ENCODE measurements at regions of chr11 and their contacts with region 1.

Region 1: GRCh38 chr11:45110562-45110961 is 35.9 kb upstream of the PRDM11 start:
- DNase-seq: peak; percentile 79
- ATAC-seq: peak; percentile 57
- H3K4me3 ChIP-seq: no peak overlapping the region
- H3K4me3 Mint-ChIP-seq: no peak overlapping the region
- H3K27ac ChIP-seq: no peak overlapping the region
- H3K27ac Mint-ChIP-seq: no peak overlapping the region
- H3K4me1 ChIP-seq: peaks cover 5% of the 10 kb centered on the region in 2 donors
- H3K4me1 Mint-ChIP-seq: peaks cover 5% of the 10 kb centered on the region
- H3K27me3 ChIP-seq: peaks cover 0 to 13% (median 8%) of the 10 kb centered on the region in 4 experiments
- H3K27me3 Mint-ChIP-seq: peaks cover 49% of the 10 kb centered on the region
- CTCF ChIP-seq: peak; percentile 80

Region 2: GRCh38 chr11:44911029-44911814 is 199.3 kb before region 1 on chr11:
- CTCF ChIA-PET with region 1: interaction called, 36 read pairs
- POLR2A ChIA-PET with region 1: no interaction called
- intact Hi-C with region 1: no loop called
- DNase-seq: peak; percentile 85
- ATAC-seq: peak; percentile 69
- H3K4me3 ChIP-seq: no peak overlapping the region
- H3K4me3 Mint-ChIP-seq: no peak overlapping the region
- H3K27ac ChIP-seq: no peak overlapping the region
- H3K27ac Mint-ChIP-seq: no peak overlapping the region
- H3K4me1 ChIP-seq: peaks cover 23 to 31% of the 10 kb centered on the region in 2 donors
- H3K4me1 Mint-ChIP-seq: peaks cover 24% of the 10 kb centered on the region
- H3K27me3 ChIP-seq: peaks cover 0 to 5% (median 0%) of the 10 kb centered on the region in 4 experiments
- H3K27me3 Mint-ChIP-seq: peaks cover 4% of the 10 kb centered on the region
- CTCF ChIP-seq: peak; percentile 82

Region 3: DNA sequence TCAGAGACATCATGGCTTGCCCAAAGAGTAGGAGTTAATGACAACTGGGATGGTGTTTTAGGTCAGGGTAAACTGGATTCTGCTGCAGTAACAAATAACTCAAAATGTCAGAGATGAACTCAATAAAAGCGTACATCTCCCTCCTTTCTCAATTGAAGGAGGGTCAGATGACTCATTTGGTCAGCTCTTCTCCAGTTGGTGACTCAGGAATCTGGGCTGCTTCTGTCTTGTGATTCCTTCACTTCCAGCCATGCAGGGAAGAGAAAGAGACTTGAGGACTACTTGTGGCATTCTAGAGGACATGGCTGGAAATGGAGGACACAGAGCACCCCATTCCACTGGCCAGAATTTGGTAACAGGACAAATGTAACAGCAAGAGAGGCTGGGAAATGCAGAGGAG is 178.8 kb after region 1 on chr11:
- CTCF ChIA-PET with region 1: interaction called, 23 read pairs
- POLR2A ChIA-PET with region 1: no interaction called
- intact Hi-C with region 1: loop called (anchors 1 kb)
- DNase-seq: no peak
- ATAC-seq: no peak
- H3K4me3 ChIP-seq: no peak overlapping the region
- H3K4me3 Mint-ChIP-seq: no peak overlapping the region
- H3K27ac ChIP-seq: no peak overlapping the region
- H3K27ac Mint-ChIP-seq: no peak overlapping the region
- H3K4me1 ChIP-seq: no peaks in the 10 kb centered on the region
- H3K4me1 Mint-ChIP-seq: no peaks in the 10 kb centered on the region
- H3K27me3 ChIP-seq: peaks cover 0 to 59% (median 25%) of the 10 kb centered on the region in 4 experiments
- H3K27me3 Mint-ChIP-seq: peaks cover 73% of the 10 kb centered on the region
- CTCF ChIP-seq: no peak

Region 4: GRCh38 chr11:45294499-45294898 is 183.9 kb after region 1 on chr11:
- CTCF ChIA-PET with region 1: interaction called, 23 read pairs
- POLR2A ChIA-PET with region 1: no interaction called
- intact Hi-C with region 1: loop called (anchors 1 kb)
- DNase-seq: no peak
- ATAC-seq: no peak
- H3K4me3 ChIP-seq: no peak overlapping the region
- H3K4me3 Mint-ChIP-seq: no peak overlapping the region
- H3K27ac ChIP-seq: no peak overlapping the region
- H3K27ac Mint-ChIP-seq: no peak overlapping the region
- H3K4me1 ChIP-seq: peaks cover 0 to 3% of the 10 kb centered on the region in 2 donors
- H3K4me1 Mint-ChIP-seq: no peaks in the 10 kb centered on the region
- H3K27me3 ChIP-seq: peaks cover 0 to 26% (median 6%) of the 10 kb centered on the region in 4 experiments
- H3K27me3 Mint-ChIP-seq: peaks cover 48% of the 10 kb centered on the region
- CTCF ChIP-seq: no peak

Region 5: GRCh38 chr11:45322891-45323600 is 212.5 kb after region 1 on chr11:
- CTCF ChIA-PET with region 1: interaction called, 10 read pairs
- POLR2A ChIA-PET with region 1: no interaction called
- intact Hi-C with region 1: no loop called
- DNase-seq: no peak
- ATAC-seq: no peak
- H3K4me3 ChIP-seq: no peak overlapping the region
- H3K4me3 Mint-ChIP-seq: no peak overlapping the region
- H3K27ac ChIP-seq: no peak overlapping the region
- H3K27ac Mint-ChIP-seq: no peak overlapping the region
- H3K4me1 ChIP-seq: no peaks in the 10 kb centered on the region
- H3K4me1 Mint-ChIP-seq: no peaks in the 10 kb centered on the region
- H3K27me3 ChIP-seq: peaks cover 0 to 25% (median 1%) of the 10 kb centered on the region in 4 experiments
- H3K27me3 Mint-ChIP-seq: peaks cover 55% of the 10 kb centered on the region
- CTCF ChIP-seq: no peak

Region 6: DNA sequence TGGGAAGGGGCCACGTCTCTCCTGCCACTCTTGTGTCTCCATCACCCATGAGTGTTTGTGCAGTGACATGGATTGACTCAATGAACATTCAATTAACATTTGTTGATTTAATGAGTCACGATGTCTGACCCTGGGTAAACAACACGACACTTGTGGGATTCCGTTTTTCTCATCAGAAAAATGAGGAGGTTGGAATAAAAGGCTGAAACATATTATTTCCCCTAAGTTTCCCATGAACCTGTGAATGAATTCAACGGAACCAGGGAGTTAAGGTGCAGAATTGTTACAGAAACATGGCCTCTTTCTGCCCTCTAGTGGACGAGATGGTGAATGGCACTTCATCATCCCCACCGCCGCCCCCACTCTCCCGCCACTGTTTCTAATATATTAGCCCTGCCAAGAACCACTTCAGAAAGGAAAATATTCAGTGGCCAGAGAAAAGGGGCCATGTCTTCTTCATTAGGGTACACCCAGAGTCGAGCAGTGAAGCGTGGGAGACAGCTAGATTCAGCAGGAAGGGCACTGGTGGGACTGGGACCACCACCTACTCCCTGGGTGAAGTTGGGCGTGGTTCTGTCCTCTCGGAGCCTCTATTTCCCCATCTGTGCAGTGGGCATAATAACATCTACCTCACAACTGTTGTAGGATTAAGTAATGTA is 221.8 kb after region 1 on chr11:
- CTCF ChIA-PET with region 1: interaction called, 238 read pairs
- POLR2A ChIA-PET with region 1: no interaction called
- intact Hi-C with region 1: loop called (anchors 1 kb)
- DNase-seq: peak; percentile 62
- ATAC-seq: peak; percentile 53
- H3K4me3 ChIP-seq: no peak overlapping the region
- H3K4me3 Mint-ChIP-seq: no peak overlapping the region
- H3K27ac ChIP-seq: no peak overlapping the region
- H3K27ac Mint-ChIP-seq: no peak overlapping the region
- H3K4me1 ChIP-seq: no peaks in the 10 kb centered on the region
- H3K4me1 Mint-ChIP-seq: peaks cover 6% of the 10 kb centered on the region
- H3K27me3 ChIP-seq: peaks cover 0 to 15% (median 0%) of the 10 kb centered on the region in 4 experiments
- H3K27me3 Mint-ChIP-seq: peaks cover 29% of the 10 kb centered on the region
- CTCF ChIP-seq: peak; percentile 95

Region 7: GRCh38 chr11:45339729-45340519 is 229.4 kb after region 1 on chr11:
- CTCF ChIA-PET with region 1: interaction called, 238 read pairs
- POLR2A ChIA-PET with region 1: no interaction called
- intact Hi-C with region 1: no loop called
- DNase-seq: peak; percentile 93
- ATAC-seq: peak; percentile 100
- H3K4me3 ChIP-seq: peak overlapping the region; percentile 23 to 65 (median 50)
- H3K4me3 Mint-ChIP-seq: peak overlapping the region; percentile 92
- H3K27ac ChIP-seq: no peak overlapping the region
- H3K27ac Mint-ChIP-seq: peak overlapping the region; percentile 76
- H3K4me1 ChIP-seq: peaks cover 8 to 13% of the 10 kb centered on the region in 2 donors
- H3K4me1 Mint-ChIP-seq: peaks cover 18% of the 10 kb centered on the region
- H3K27me3 ChIP-seq: peaks cover 0 to 4% (median 2%) of the 10 kb centered on the region in 4 experiments
- H3K27me3 Mint-ChIP-seq: peaks cover 26% of the 10 kb centered on the region
- CTCF ChIP-seq: peak; percentile 90

Measured in B cell (primary cell).